Transverse colon (tissue), 4 donors: ENCODE measurements at regions of chr9 and their contacts with region 1.

Region 1: DNA sequence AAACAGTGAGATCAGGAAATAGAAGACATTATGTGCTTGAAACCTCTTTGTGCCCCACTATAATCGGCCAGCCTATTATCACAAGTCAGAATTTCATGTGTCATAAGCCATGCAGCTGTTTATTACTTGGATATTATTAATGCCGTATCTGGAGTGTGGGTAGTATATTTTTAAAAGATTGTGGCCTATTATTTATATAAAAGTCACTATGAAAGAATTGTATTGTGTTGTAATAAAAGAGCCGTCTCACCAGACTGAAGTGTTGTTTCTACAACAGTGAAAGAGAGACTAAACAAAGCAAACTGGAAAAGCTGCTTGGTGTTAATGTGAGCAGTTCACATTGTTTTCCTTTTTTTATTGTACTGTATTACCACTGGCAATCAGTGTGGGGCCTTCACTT is 449.1 kb downstream of the PSAT1 start:
- DNase-seq: no peak
- H3K4me3 ChIP-seq: no peak overlapping the region
- H3K27ac ChIP-seq: no peak overlapping the region
- H3K4me1 ChIP-seq: no peaks in the 10 kb centered on the region
- H3K27me3 ChIP-seq: no peaks in the 10 kb centered on the region
- CTCF ChIP-seq: no peak
- EP300 ChIP-seq: no peak
- POLR2A ChIP-seq: no peak

Region 2: DNA sequence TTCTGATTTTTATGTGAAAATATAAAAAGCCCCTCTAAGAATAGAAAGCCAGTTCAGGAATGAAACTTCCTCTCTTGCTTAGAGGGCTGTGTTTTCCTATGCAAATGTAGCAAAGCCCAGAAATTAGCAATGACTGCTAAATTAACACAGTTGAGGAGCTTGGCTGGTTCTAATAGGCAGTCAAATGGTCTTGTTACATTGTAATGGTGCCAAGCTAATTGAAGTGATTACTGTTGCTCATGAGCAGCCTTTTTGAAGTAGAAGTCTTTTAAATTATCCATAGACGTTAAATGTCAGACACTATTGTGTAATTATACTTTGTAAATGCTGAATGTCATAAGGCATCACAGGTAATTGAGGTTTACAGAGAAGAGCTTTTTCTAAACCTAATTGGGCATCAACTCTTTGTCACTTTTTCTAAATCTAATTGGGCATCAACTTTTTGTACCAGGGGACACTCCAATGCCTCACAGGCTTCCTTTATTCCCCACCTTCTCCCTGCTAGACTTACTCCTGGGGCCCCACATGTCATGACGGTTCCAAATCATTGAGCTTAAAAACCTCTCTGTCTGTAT is 219.9 kb before region 1 on chr9:
- in situ Hi-C with region 1: no loop called
- intact Hi-C with region 1: no loop called
- DNase-seq: no peak
- H3K4me3 ChIP-seq: no peak overlapping the region
- H3K27ac ChIP-seq: no peak overlapping the region
- H3K4me1 ChIP-seq: no peaks in the 10 kb centered on the region
- H3K27me3 ChIP-seq: no peaks in the 10 kb centered on the region
- CTCF ChIP-seq: no peak
- EP300 ChIP-seq: no peak
- POLR2A ChIP-seq: no peak

Region 3: DNA sequence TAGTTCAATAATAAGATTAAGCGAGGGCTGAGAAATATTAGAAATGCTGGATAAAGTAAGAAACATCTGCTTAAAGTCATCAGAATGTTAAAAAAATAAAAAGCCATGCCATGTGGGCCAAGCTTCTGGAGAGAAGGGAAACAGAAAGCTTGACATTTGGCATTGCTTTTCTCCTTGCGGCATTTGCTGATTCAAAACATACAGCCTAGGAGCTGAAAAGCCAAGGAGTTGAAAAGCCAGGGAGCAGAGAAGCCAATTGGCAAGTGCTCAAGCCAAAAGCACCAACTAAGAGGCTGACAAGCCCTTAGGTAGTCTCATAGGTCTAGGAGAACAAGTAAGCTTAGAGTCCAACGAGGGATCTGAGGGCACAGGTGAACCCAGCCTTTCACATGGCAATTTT is 1580.1 kb after region 1 on chr9:
- in situ Hi-C with region 1: no loop called
- intact Hi-C with region 1: loop called (anchors 5 kb)
- DNase-seq: no peak
- H3K4me3 ChIP-seq: no peak overlapping the region
- H3K27ac ChIP-seq: no peak overlapping the region
- H3K4me1 ChIP-seq: peaks cover 0 to 7% (median 0%) of the 10 kb centered on the region in 4 donors
- H3K27me3 ChIP-seq: no peaks in the 10 kb centered on the region
- CTCF ChIP-seq: no peak
- EP300 ChIP-seq: no peak
- POLR2A ChIP-seq: no peak